Aorta (tissue), 5 donors: ENCODE measurements at regions of chr1 and their contacts with region 1.

Region 1: DNA sequence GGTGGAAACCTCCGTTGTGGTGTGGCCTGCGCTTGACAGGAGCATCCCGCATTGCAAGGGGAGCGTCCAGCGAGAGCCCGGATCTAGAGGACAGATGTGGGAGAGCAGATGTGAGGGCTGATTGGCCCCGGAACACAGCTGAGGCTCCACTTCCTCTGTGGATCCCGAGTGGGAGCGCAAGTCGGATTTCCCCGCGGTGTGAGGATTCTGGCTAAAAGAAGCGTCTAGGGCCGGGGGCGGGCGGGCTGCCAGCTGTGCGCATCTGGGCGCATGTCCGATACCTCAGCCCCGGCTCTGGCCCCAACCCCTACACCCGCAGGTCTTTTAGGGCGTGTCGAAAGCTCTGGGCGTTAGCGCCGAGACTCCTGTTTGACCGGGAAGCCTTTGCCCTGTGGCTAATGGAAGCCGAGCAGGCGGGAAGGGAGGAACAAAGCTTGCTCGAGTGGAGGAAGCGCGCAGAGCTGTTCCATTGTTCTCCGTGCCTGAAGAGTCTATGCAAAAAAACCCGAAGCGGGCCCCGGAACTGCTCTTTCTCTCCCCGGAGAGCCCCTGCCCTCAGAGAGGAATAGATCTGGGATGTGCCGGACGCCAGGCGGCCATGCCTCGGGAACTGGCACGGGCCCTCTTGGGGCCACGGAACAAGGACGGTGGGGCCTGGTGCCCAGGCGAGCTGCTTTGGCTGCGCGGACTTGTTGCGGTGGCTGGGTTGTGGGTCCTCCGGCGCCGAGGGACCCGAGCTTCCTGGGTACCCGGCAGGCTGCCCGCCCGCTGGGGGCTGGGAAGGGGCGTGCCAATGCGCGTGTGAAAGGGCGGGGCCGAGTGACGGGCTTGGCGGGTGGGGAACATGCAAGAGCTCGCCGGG is 111.1 kb downstream of the NAV1 start:
- DNase-seq: peak; percentile 87 to 92
- ATAC-seq: peak; percentile 74
- H3K4me3 ChIP-seq: peak overlapping the region; percentile 11 to 40
- H3K27ac ChIP-seq: no peak overlapping the region
- H3K4me1 ChIP-seq: peaks cover 0 to 4% of the 10 kb centered on the region in 2 donors
- H3K27me3 ChIP-seq: no peaks in the 10 kb centered on the region

Region 2: GRCh38 chr1:201399352-201400126 is 250.5 kb before region 1 on chr1:
- intact Hi-C with region 1: no loop called
- DNase-seq: no peak
- ATAC-seq: no peak
- H3K4me3 ChIP-seq: no peak overlapping the region
- H3K27ac ChIP-seq: no peak overlapping the region
- H3K4me1 ChIP-seq: no peaks in the 10 kb centered on the region
- H3K27me3 ChIP-seq: no peaks in the 10 kb centered on the region

Region 3: GRCh38 chr1:201628490-201628889 is 21.5 kb before region 1 on chr1:
- intact Hi-C with region 1: loop called in 1 of 2 experiments (anchors 2 kb)
- DNase-seq: no peak
- ATAC-seq: no peak
- H3K4me3 ChIP-seq: no peak overlapping the region
- H3K27ac ChIP-seq: no peak overlapping the region
- H3K4me1 ChIP-seq: peaks cover 9 to 18% of the 10 kb centered on the region in 2 donors
- H3K27me3 ChIP-seq: no peaks in the 10 kb centered on the region

Region 4: GRCh38 chr1:201696217-201696761 is 46.3 kb after region 1 on chr1:
- intact Hi-C with region 1: loop called in 1 of 2 experiments (anchors 5 kb)
- DNase-seq: peak; percentile 87 to 93
- ATAC-seq: peak; percentile 81
- H3K4me3 ChIP-seq: no peak overlapping the region
- H3K27ac ChIP-seq: peak overlapping the region in 1 of 2 donors; percentile 12
- H3K4me1 ChIP-seq: peaks cover 0 to 2% of the 10 kb centered on the region in 2 donors
- H3K27me3 ChIP-seq: no peaks in the 10 kb centered on the region

Region 5: GRCh38 chr1:201946224-201946908 is 296.4 kb after region 1 on chr1 and contains the start of gene LMOD1:
- intact Hi-C with region 1: no loop called
- DNase-seq: peak; percentile 95 to 96
- ATAC-seq: peak; percentile 91
- H3K4me3 ChIP-seq: peak within 1 kb of the TSS; percentile 77 to 100
- H3K27ac ChIP-seq: peak within 1 kb of the TSS; percentile 99
- H3K4me1 ChIP-seq: peaks cover 2 to 3% of the 10 kb centered on the region in 2 donors
- H3K27me3 ChIP-seq: no peaks in the 10 kb centered on the region
- total RNA-seq, gene LMOD1: 347 to 469 TPM